Panc1 (cell line): ENCODE measurements at regions of chr5 and their contacts with region 1.

Region 1: GRCh38 chr5:24703934-24704333 is 59.2 kb upstream of the CDH10 start:
- DNase-seq: no peak
- ATAC-seq: no peak
- H3K4me3 ChIP-seq: no peak overlapping the region
- H3K27ac ChIP-seq: no peak overlapping the region
- H3K4me1 ChIP-seq: no peaks in the 10 kb centered on the region
- H3K27me3 ChIP-seq: no peaks in the 10 kb centered on the region
- CTCF ChIP-seq: no peak

Region 2: DNA sequence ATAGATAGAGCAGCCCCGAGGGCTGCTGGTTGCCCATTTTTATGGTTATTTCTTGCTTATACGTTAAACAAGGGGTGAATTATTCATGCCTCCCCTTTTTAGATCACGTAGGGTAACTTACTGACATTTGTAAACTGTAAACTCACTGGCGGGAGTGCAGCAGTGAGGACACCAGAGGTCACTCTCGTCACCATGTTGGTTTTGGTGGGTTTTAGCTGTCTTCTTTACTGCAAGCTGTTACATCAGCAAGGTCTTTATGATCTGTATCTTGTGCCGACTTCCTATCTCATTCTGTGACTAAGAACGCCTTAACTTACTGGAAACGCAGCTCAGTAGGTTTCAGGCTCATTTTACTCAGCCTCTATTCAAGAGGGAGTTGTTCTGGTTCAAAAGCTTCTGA is 1351.5 kb before region 1 on chr5:
- CTCF ChIA-PET with region 1: no interaction called
- POLR2A ChIA-PET with region 1: interaction called, 12 read pairs
- in situ Hi-C with region 1: no loop called
- intact Hi-C with region 1: no loop called
- DNase-seq: no peak
- ATAC-seq: no peak
- H3K4me3 ChIP-seq: no peak overlapping the region
- H3K27ac ChIP-seq: no peak overlapping the region
- H3K4me1 ChIP-seq: no peaks in the 10 kb centered on the region
- H3K27me3 ChIP-seq: no peaks in the 10 kb centered on the region
- CTCF ChIP-seq: no peak

Region 3: GRCh38 chr5:24646914-24647313 is 57.0 kb before region 1 on chr5:
- CTCF ChIA-PET with region 1: no interaction called
- POLR2A ChIA-PET with region 1: no interaction called
- in situ Hi-C with region 1: no loop called
- intact Hi-C with region 1: no loop called
- DNase-seq: no peak
- ATAC-seq: no peak
- H3K4me3 ChIP-seq: no peak overlapping the region
- H3K27ac ChIP-seq: no peak overlapping the region
- H3K4me1 ChIP-seq: no peaks in the 10 kb centered on the region
- H3K27me3 ChIP-seq: no peaks in the 10 kb centered on the region; the same call in 1 of the 2 replicates
- CTCF ChIP-seq: no peak